Cardiac septum (tissue), 1 donor: ENCODE measurements at regions of chr2 and their contacts with region 1.

Region 1: GRCh38 chr2:232439758-232440135 is 16.2 kb upstream of the ALPI start:
- DNase-seq: peak; percentile 24

Region 2: DNA sequence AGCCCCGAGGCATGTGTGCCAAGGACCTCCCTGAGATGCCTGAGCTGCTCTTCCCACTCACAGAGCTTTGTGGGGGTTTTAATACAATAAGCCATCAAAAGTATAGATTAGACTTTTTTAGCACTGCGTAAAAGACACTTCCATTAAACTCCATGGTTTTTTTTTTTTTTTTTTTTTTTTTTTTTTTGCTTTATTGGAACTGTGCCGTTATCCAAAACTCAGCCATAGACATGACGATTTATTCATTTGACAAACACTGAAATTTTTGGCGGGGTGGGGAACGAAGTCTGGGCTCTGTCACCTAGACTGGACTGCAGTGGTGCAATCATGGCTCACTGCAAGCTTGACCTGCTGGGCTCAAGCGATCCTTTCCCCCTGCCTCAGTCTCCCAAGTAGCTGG is 532.0 kb before region 1 on chr2:
- intact Hi-C with region 1: loop called (anchors 2 kb)
- DNase-seq: no peak